Cardiac septum (tissue), 1 donor: ENCODE measurements at regions of chr14 and their contacts with region 1.

Region 1: DNA sequence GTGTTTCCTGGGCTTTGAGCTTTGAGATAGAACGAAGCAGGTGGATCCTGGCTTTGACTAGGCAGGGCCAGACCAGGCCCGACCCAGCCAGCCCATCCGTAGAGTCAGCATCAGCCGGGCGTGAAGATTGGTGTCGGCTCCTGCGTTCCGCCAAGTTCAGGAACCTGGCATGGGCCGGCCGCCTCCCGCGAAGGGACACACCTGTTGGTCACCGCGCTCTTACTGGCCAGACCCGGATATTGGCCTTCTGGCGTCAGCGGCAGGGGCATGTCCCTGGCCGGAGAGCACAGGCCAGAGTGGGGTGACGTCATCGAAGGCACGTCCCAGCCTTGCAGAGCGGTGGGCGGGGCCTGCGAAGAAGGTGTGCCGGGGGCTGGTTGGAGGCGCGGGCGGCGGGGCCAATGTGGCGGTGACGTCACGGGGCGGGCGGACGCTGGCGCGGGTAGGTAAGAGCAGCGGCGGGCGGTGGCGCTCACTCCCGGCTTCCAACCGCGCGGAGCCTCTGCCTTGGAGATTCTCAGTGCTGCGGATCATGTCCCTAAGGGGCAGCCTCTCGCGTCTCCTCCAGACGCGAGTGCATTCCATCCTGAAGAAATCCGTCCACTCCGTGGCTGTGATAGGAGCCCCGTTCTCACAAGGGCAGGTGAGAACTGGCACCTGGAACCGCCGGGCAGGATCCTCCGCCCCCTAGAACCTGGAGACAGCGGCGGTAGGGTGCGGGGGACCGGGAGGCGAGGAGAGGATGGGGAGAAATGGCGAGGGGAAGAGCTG is at the start of gene ARG2:
- DNase-seq: peak; percentile 99
- total RNA-seq, gene ARG2: 1.6 TPM

Region 2: GRCh38 chr14:67650694-67651093 is 31.1 kb after region 1 on chr14:
- intact Hi-C with region 1: no loop called
- DNase-seq: no peak

Region 3: GRCh38 chr14:67666750-67667449 is 47.3 kb after region 1 on chr14:
- intact Hi-C with region 1: loop called (anchors 1 kb)
- DNase-seq: no peak